Natural killer cell (primary cell): ENCODE measurements at regions of chr7 and their contacts with region 1.

Region 1: GRCh38 chr7:7221602-7222038 is 39.3 kb downstream of the C1GALT1 start:
- DNase-seq: no peak
- ATAC-seq: peak; percentile 49 to 82 (median 52)
- H3K4me3 ChIP-seq: no peak overlapping the region
- H3K4me3 Mint-ChIP-seq: no peak overlapping the region
- H3K27ac ChIP-seq: no peak overlapping the region
- H3K27ac Mint-ChIP-seq: peak overlapping the region; percentile 63 to 81
- H3K4me1 ChIP-seq: peaks cover 7% of the 10 kb centered on the region
- H3K4me1 Mint-ChIP-seq: peaks cover 50 to 53% of the 10 kb centered on the region in 2 donors
- H3K27me3 ChIP-seq: no peaks in the 10 kb centered on the region
- H3K27me3 Mint-ChIP-seq: no peaks in the 10 kb centered on the region
- CTCF ChIP-seq: no peak

Region 2: DNA sequence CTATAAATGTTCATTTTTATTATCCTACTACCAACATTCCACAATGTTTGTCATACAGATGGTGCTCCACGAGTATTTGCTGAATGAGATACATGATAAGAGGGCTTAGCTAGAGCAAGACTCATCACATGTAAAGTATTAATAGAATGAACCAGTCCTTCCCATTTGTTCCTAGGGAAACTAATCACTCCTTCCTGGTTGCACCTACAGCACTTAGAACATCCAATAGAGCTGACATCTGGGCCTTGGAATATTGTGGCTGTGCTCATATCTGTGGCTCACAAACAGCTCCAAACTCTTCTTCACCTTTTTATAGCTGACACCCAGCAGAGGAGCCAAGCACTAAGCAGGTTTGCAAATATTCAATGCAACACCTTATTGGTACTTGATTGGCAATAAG is 131.2 kb before region 1 on chr7:
- intact Hi-C with region 1: no loop called
- DNase-seq: no peak
- ATAC-seq: no peak
- H3K4me3 ChIP-seq: no peak overlapping the region
- H3K4me3 Mint-ChIP-seq: no peak overlapping the region
- H3K27ac ChIP-seq: no peak overlapping the region
- H3K27ac Mint-ChIP-seq: no peak overlapping the region
- H3K4me1 ChIP-seq: no peaks in the 10 kb centered on the region
- H3K4me1 Mint-ChIP-seq: no peaks in the 10 kb centered on the region
- H3K27me3 ChIP-seq: no peaks in the 10 kb centered on the region
- H3K27me3 Mint-ChIP-seq: peaks cover 30 to 42% of the 10 kb centered on the region in 2 donors
- CTCF ChIP-seq: no peak

Region 3: GRCh38 chr7:7257899-7258692 is 36.5 kb after region 1 on chr7:
- intact Hi-C with region 1: loop called (anchors 5 kb)
- DNase-seq: peak; percentile 24 to 56
- ATAC-seq: peak; percentile 73 to 86 (median 84)
- H3K4me3 ChIP-seq: peak overlapping the region; percentile 39
- H3K4me3 Mint-ChIP-seq: peak overlapping the region; percentile 84
- H3K27ac ChIP-seq: peak overlapping the region; percentile 89
- H3K27ac Mint-ChIP-seq: peak overlapping the region; percentile 90 to 94
- H3K4me1 ChIP-seq: peaks cover 36% of the 10 kb centered on the region
- H3K4me1 Mint-ChIP-seq: peaks cover 51 to 66% of the 10 kb centered on the region in 2 donors
- H3K27me3 ChIP-seq: no peaks in the 10 kb centered on the region
- H3K27me3 Mint-ChIP-seq: no peaks in the 10 kb centered on the region
- CTCF ChIP-seq: no peak